Naive thymus-derived CD4-positive, alpha-beta T cell (primary cell): ENCODE measurements at regions of chr19 and their contacts with region 1.

Region 1: DNA sequence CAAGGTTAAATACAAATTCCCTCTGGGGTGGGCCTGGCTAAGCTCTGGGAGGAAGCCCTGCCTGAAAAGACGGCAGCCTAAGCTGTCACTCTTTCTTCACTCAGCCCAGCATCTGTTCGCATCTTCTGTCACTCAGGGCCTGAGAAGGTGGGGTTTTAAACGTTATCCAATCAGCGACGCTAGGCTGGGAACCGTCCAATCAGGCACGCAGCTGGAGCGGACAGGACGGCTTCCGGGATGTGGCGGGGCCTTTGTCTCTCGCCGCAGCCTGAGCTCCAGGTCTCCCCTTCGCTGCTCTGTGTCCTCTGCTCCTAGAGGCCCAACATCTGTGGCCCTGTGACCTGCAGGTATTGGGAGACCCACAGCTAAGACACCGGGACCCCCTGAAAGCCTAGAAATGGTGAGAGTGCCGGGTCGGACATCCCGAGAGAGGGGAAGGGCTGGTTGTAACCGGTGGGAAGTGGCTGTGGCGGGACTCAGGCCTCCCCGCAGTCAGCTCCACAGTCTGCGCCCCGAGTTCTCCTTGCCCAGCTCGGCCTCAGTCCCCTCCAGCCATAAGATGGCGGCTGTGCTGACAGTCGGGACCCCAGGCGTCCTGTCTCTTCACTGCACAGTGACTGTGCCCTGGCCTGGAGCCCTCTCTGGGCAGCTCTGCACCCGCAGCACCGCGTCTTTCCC is at the start of gene ZNF431:
- DNase-seq: peak; percentile 63 to 95 (median 91)
- ATAC-seq: peak; percentile 100
- H3K4me3 ChIP-seq: peak within 1 kb of the TSS; percentile 94
- H3K4me3 Mint-ChIP-seq: peak within 1 kb of the TSS; percentile 95 to 98 (median 97)
- H3K27ac ChIP-seq: peak within 1 kb of the TSS; percentile 91
- H3K27ac Mint-ChIP-seq: peak within 1 kb of the TSS; percentile 93 to 99 (median 96)
- H3K4me1 ChIP-seq: peaks cover 3 to 6% of the 10 kb centered on the region in 2 donors
- H3K4me1 Mint-ChIP-seq: peaks cover 20 to 69% (median 54%) of the 10 kb centered on the region in 7 donors
- H3K27me3 ChIP-seq: no peaks in the 10 kb centered on the region
- H3K27me3 Mint-ChIP-seq: no peaks in the 10 kb centered on the region
- total RNA-seq, gene ZNF431: 19.1 to 36.8 (median 25.4) TPM

Region 2: DNA sequence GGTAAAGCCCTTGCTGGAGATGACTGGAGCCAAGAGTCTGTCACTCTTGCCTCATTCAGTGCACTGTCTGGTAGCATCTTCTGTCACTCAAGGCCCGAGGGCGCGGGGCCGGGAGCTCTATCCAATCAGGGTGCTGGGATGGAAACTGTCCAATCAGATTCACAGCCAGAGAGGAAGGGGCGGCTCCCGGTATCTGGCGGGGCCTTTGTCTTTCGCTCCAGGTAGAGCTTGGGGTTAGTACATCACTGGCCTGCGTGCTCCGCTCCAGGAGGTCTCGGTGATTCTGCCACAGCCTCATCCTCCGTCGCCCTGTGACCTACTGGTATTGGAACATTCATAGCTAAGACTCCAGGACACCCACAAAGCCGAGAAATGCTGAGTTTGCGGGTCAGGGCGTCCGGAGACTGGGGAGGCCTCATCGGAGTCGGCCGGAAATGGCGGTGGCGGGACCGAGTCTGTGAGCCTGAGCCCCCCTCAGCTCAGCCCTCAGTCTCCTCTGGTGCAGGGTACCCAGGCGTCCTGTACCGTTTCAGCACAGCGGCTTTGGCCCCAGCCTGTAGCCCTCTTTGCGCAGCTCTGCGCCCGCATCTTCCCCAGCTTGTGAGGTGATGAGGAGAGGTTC is 142.1 kb before region 1 on chr19:
- CTCF ChIA-PET with region 1: no interaction called
- POLR2A ChIA-PET with region 1: interaction called, 7 read pairs
- intact Hi-C with region 1: loop called in 1 of 2 experiments (anchors 10 kb)
- DNase-seq: peak; percentile 64 to 92 (median 86)
- ATAC-seq: peak; percentile 100
- H3K4me3 ChIP-seq: peak overlapping the region; percentile 67
- H3K4me3 Mint-ChIP-seq: peak overlapping the region; percentile 76 to 92 (median 85)
- H3K27ac ChIP-seq: no peak overlapping the region
- H3K27ac Mint-ChIP-seq: peak overlapping the region in 5 of 9 donors; percentile 36 to 87 (median 47)
- H3K4me1 ChIP-seq: no peaks in the 10 kb centered on the region
- H3K4me1 Mint-ChIP-seq: peaks cover 5 to 16% (median 7%) of the 10 kb centered on the region in 7 donors
- H3K27me3 ChIP-seq: no peaks in the 10 kb centered on the region
- H3K27me3 Mint-ChIP-seq: no peaks in the 10 kb centered on the region

Region 3: GRCh38 chr19:21082011-21082975 is 59.6 kb before region 1 on chr19 and contains the start of gene ZNF714:
- CTCF ChIA-PET with region 1: interaction called, 4 read pairs
- POLR2A ChIA-PET with region 1: interaction called, 12 read pairs
- intact Hi-C with region 1: loop called (anchors 1 to 2 kb)
- DNase-seq: peak; percentile 55 to 90 (median 80)
- ATAC-seq: peak; percentile 100
- H3K4me3 ChIP-seq: peak within 1 kb of the TSS; percentile 92
- H3K4me3 Mint-ChIP-seq: peak within 1 kb of the TSS; percentile 91 to 100 (median 99)
- H3K27ac ChIP-seq: peak within 1 kb of the TSS; percentile 74
- H3K27ac Mint-ChIP-seq: peak within 1 kb of the TSS; percentile 85 to 99 (median 95)
- H3K4me1 ChIP-seq: no peaks in the 10 kb centered on the region
- H3K4me1 Mint-ChIP-seq: peaks cover 3 to 24% (median 18%) of the 10 kb centered on the region in 7 donors
- H3K27me3 ChIP-seq: no peaks in the 10 kb centered on the region
- H3K27me3 Mint-ChIP-seq: no peaks in the 10 kb centered on the region
- total RNA-seq, gene ZNF714: 7.4 to 22.3 (median 13.3) TPM

Region 4: DNA sequence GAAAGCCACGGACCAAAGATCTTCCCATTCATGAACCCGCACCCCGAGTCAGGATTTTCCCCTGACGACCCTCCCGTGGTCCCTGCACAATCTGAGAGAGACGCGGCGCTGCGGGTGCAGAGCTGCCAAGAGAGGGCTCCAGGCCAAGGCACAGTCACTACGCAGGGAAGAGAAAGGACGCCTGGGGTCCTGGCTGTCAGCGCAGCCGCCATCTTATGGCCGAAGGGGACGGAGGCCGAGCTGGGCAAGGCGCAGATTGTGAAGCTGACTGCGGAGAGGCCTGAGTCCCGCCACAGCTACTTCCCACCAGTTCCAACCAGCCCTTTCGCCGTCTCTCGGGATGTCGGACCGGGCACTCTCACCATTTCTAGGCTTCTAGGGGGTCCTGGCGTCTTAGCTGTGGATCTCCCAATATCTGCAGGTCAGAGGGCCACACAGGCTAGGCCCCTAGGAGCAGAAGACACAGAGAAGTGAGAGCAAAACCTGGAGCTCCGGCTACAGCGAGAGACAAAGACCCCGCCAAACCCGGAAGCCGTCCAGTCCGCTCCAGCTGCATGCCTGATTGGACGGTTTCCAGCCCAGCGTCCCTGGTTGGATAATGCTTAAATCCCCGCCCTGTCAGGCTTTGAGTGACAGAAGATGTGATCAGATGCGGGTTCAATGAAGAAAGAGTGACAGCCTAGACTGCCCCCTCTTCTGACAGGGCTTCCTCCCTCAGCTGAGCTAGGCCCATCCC is 625.3 kb after region 1 on chr19 and contains the start of gene ZNF100:
- CTCF ChIA-PET with region 1: no interaction called
- POLR2A ChIA-PET with region 1: no interaction called
- intact Hi-C with region 1: loop called in 1 of 2 experiments (anchors 5 kb)
- DNase-seq: peak; percentile 64 to 88 (median 80)
- ATAC-seq: peak; percentile 98
- H3K4me3 ChIP-seq: peak within 1 kb of the TSS; percentile 97
- H3K4me3 Mint-ChIP-seq: peak within 1 kb of the TSS; percentile 92 to 98 (median 97)
- H3K27ac ChIP-seq: peak within 1 kb of the TSS; percentile 81
- H3K27ac Mint-ChIP-seq: peak within 1 kb of the TSS; percentile 89 to 98 (median 92)
- H3K4me1 ChIP-seq: no peaks in the 10 kb centered on the region
- H3K4me1 Mint-ChIP-seq: peaks cover 7 to 43% (median 27%) of the 10 kb centered on the region in 7 donors
- H3K27me3 ChIP-seq: no peaks in the 10 kb centered on the region
- H3K27me3 Mint-ChIP-seq: no peaks in the 10 kb centered on the region
- total RNA-seq, gene ZNF100: 9.5 to 22.5 (median 18.4) TPM

Region 5: GRCh38 chr19:21851596-21852345 is 709.8 kb after region 1 on chr19:
- CTCF ChIA-PET with region 1: no interaction called
- POLR2A ChIA-PET with region 1: interaction called, 5 read pairs
- intact Hi-C with region 1: loop called in 1 of 2 experiments (anchors 5 kb)
- DNase-seq: peak; percentile 71 to 90 (median 88)
- ATAC-seq: peak; percentile 99
- H3K4me3 ChIP-seq: peak overlapping the region; percentile 98
- H3K4me3 Mint-ChIP-seq: peak overlapping the region; percentile 89 to 96 (median 92)
- H3K27ac ChIP-seq: peak overlapping the region; percentile 90
- H3K27ac Mint-ChIP-seq: peak overlapping the region; percentile 68 to 96 (median 92)
- H3K4me1 ChIP-seq: peaks cover 6 to 10% of the 10 kb centered on the region in 2 donors
- H3K4me1 Mint-ChIP-seq: peaks cover 8 to 34% (median 27%) of the 10 kb centered on the region in 7 donors
- H3K27me3 ChIP-seq: no peaks in the 10 kb centered on the region
- H3K27me3 Mint-ChIP-seq: peaks cover 0 to 1% (median 0%) of the 10 kb centered on the region in 5 donors